Activated CD4-positive, alpha-beta T cell treated with anti-CD3 and anti-CD28 coated beads, Interleukin-2, amount 10 ng/mL, durations not matched to agents 24 days and 14 days (primary cell): ENCODE measurements at regions of chr5 and their contacts with region 1.

Region 1: DNA sequence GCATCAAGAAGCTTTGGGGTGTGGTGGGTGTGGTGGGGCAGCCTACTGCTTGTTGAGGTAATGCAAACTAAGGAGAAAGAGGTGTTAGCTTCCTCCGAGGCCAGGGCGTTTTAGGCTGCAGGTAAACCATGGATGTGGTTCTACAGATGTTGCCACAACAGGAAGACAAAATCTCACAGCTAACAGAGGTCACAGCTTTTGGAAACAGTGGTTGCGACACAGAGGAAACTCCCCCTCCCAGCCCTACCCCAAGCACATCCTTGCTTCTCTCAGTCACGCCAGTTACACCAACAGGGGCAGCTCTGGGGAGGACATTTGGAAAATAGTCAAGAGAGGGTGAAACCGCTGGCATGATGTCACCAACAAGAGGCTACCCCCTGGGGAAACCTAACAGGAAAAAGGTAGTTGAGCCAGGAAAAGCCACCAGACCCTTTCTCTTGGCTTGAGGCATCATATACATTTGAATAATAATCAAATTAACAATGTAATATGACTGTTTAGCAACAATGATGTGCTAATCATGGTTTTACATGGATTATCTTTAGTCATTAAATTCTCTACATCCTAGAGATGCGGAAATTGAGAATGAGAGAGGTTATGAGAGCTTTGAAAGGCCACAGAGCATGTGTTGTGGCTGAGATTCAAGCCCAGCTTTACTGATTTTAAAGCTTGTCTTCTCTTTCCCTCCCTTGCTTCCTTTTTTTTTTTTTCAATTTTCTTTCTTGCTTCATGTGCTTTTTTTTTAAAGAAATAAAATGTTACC is 82.2 kb upstream of the IL12B start:
- DNase-seq: peak; percentile 94
- H3K4me3 Mint-ChIP-seq: peak overlapping the region; percentile 46
- H3K27ac Mint-ChIP-seq: peak overlapping the region; percentile 82
- H3K4me1 Mint-ChIP-seq: peaks cover 58% of the 10 kb centered on the region
- H3K27me3 Mint-ChIP-seq: peaks cover 12% of the 10 kb centered on the region

Region 2: DNA sequence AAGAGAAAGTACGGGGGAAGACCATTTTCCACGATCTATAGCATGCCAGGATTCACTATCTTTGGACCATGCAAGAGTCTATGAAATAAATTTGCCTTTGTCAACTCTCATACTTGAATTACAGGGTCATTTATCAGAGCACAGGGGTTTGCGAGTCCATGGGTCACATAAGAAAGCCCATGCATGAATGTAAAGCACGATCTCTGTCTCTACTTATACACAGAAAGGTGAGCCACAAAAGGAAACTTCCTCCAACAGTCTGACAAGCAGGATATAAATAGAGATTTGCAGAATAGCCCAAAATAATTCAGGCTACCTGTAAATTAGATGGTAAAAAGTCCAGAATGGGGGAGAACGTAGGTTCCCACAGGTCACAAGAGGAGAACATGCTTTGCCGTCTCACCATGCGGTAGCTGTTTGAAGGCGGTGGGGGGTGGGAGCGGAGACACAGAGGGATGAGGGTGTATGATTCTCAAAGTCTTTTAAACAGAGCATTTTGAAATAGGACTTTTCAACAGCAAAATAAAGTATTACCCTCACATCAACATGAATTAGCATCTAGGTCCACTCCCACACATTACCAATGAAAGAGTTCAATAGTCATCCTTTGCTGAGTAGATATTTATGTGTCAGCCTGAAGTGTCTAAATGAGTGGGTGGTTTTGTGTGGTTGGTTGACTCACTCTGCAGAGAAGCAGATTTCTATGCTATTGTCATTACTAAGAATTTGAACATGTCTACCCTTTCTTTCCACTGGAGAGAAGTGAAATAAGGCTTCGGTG is 592.4 kb before region 1 on chr5:
- intact Hi-C with region 1: loop called (anchors 1 kb)
- DNase-seq: peak; percentile 61
- H3K4me3 Mint-ChIP-seq: peak overlapping the region; percentile 60
- H3K27ac Mint-ChIP-seq: peak overlapping the region; percentile 76
- H3K4me1 Mint-ChIP-seq: peaks cover 45% of the 10 kb centered on the region
- H3K27me3 Mint-ChIP-seq: no peaks in the 10 kb centered on the region

Region 3: DNA sequence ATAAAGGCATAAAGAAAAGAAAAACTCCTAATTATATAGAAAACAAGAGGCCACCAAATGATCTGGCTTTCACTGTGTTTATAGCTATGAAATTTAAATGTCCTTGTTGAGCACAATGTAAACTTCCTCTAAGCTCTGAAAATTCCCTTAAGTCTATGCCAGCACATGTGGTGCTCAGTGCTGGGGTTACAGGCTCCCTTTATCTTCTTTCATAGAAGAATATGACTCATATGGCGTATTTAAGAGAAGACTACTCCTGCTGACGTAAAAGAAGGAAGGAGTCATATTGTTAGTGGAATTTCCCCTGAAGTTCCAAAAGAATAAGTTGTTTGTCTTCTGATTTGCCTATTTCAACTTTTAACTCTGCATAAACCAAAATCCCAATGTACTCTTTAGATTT is 233.5 kb before region 1 on chr5:
- intact Hi-C with region 1: loop called (anchors 5 kb)
- DNase-seq: no peak
- H3K4me3 Mint-ChIP-seq: peak overlapping the region; percentile 68
- H3K27ac Mint-ChIP-seq: peak overlapping the region; percentile 94
- H3K4me1 Mint-ChIP-seq: peaks cover 60% of the 10 kb centered on the region
- H3K27me3 Mint-ChIP-seq: no peaks in the 10 kb centered on the region

Region 4: GRCh38 chr5:159336991-159337955 is 75.2 kb before region 1 on chr5:
- intact Hi-C with region 1: loop called (anchors 1 kb)
- DNase-seq: peak; percentile 88
- H3K4me3 Mint-ChIP-seq: peak overlapping the region; percentile 48
- H3K27ac Mint-ChIP-seq: peak overlapping the region; percentile 76
- H3K4me1 Mint-ChIP-seq: peaks cover 64% of the 10 kb centered on the region
- H3K27me3 Mint-ChIP-seq: peaks cover 4% of the 10 kb centered on the region

Region 5: DNA sequence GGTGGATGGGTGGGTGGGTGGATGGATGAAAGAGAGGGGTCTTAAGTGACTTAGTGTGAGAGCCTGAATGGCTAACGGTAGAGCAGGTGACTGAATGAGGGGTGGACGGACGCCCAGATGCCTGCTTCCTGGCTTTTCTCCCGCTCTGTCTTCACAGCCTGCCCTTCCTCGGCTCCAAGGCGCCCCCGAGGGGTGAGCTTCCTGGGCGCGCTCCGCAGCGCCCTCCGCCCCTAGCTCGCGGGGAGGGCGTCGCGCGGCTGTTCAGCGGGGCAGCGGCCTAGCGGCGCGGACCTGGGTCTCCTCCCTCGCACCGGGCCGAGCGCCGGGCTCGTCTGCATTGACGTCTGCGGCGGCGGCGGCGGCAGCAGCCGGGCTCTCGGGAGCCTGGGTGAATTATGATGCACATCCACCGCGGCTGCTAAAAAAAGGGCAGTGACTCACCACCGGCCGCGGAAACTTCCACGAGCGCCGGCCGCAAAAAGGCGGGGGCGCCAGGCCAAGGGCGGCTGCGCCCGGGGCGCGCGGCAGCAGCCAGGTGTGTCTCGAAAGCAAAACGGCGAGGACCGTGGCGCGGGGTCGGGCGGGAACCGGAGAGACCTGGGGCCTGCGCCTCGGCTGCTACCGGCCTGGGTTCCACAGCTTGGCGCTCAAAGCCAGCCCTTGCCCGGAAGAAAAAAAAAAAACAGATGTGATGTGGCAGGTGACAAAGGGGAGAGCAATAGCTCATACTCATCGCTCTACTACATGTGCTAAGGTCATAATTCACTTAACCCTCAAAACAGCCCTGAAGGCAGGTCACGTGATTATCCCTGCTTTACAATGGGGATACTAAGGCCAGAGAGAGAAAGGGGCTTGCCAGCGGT is 360.8 kb after region 1 on chr5:
- intact Hi-C with region 1: loop called (anchors 1 kb)
- DNase-seq: peak; percentile 94
- H3K4me3 Mint-ChIP-seq: peak overlapping the region; percentile 51
- H3K27ac Mint-ChIP-seq: peak overlapping the region; percentile 63
- H3K4me1 Mint-ChIP-seq: peaks cover 24% of the 10 kb centered on the region
- H3K27me3 Mint-ChIP-seq: peaks cover 25% of the 10 kb centered on the region

Region 6: DNA sequence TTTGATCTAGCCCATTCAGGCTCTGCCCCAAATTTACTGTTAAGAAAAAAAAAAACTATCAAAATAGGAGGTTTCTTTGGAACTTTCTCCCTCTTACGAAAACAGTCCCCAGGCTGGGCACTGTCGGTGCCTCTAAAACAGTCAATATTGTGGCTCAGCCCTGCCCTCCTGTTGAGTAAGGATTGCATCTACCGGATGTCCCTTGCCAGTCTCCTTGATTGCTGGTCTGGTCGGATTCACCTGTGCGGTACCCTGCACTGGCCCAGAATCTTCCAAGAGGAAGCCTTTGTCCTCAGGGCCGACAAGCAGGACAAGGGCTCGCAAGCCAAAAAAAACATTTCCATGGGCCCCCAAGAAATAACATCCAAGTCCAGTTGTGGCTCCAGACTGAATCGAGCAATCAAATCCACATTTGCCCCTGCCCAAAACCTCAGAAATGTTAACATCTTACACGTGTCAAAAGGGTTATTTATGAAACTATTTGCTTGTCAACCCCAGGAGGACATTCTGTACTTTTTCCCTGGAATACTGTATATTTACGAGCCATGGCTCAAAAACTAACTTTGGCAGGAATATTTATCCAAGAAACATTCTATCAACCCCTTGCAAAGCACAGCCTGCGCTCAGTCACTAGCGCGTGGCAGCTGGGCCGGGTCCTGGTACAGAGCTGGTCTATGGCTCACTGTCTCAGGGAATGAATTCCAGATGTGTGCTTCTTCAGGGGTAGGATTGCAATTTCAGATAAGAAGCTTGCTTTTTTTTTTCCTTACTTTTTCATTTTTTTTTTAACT is 374.6 kb after region 1 on chr5:
- intact Hi-C with region 1: no loop called
- DNase-seq: no peak
- H3K4me3 Mint-ChIP-seq: no peak overlapping the region
- H3K27ac Mint-ChIP-seq: no peak overlapping the region
- H3K4me1 Mint-ChIP-seq: peaks cover 6% of the 10 kb centered on the region
- H3K27me3 Mint-ChIP-seq: peaks cover 24% of the 10 kb centered on the region

Region 7: GRCh38 chr5:160342403-160342941 is 930.0 kb after region 1 on chr5:
- intact Hi-C with region 1: no loop called
- DNase-seq: no peak
- H3K4me3 Mint-ChIP-seq: no peak overlapping the region
- H3K27ac Mint-ChIP-seq: no peak overlapping the region
- H3K4me1 Mint-ChIP-seq: peaks cover 2% of the 10 kb centered on the region
- H3K27me3 Mint-ChIP-seq: no peaks in the 10 kb centered on the region